ENCODE measurements at regions of chr15 and their contacts with region 1.

Region 1: GRCh38 chr15:94230956-94231722 is at the start of gene MCTP2:
- DNase-seq: peak; percentile 92
- ATAC-seq: peak; percentile 89
- H3K4me3 Mint-ChIP-seq: peak within 1 kb of the TSS; percentile 91
- H3K27ac Mint-ChIP-seq: peak within 1 kb of the TSS; percentile 97
- H3K4me1 Mint-ChIP-seq: peaks cover 57% of the 10 kb centered on the region
- H3K27me3 Mint-ChIP-seq: peaks cover 2% of the 10 kb centered on the region
- total RNA-seq, gene MCTP2: 26.1 to 28.5 TPM

Region 2: DNA sequence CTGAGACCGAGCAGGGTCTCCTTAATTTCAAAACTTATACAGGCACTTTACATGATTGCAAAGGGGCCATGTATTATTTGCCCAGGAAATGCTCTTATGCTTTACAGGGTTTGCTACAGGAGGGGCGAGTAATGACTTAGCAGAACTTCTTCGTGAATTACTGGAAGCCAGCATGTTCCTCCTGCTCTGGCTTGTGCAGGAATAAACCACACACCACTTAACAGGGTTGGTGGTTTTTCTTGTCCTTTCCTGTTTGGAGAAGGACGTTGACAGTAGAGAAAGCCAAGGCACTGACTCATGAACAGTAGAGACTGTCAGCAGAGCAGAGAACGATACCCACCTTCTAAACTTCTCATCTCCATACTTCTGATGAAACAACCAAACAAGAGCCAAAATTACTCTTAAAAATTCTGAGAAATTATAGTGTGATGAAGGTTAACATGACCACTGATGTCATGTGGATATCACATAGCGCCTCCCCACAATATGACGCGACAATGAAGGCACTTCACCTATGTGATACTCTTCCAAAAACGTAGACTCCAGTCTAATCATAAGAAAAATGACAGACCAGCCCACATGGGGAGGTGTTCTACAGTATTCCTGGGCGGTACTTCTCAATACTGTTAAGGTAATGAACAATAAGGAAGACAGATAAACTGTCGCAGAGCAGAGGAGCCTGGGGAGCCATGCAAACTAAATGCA is 24.5 kb before region 1 on chr15:
- POLR2A ChIA-PET with region 1: no interaction called
- DNase-seq: no peak
- ATAC-seq: peak; percentile 88
- H3K4me3 Mint-ChIP-seq: peak overlapping the region; percentile 65
- H3K27ac Mint-ChIP-seq: peak overlapping the region; percentile 90
- H3K4me1 Mint-ChIP-seq: peaks cover 25% of the 10 kb centered on the region
- H3K27me3 Mint-ChIP-seq: peaks cover 11% of the 10 kb centered on the region

Region 3: DNA sequence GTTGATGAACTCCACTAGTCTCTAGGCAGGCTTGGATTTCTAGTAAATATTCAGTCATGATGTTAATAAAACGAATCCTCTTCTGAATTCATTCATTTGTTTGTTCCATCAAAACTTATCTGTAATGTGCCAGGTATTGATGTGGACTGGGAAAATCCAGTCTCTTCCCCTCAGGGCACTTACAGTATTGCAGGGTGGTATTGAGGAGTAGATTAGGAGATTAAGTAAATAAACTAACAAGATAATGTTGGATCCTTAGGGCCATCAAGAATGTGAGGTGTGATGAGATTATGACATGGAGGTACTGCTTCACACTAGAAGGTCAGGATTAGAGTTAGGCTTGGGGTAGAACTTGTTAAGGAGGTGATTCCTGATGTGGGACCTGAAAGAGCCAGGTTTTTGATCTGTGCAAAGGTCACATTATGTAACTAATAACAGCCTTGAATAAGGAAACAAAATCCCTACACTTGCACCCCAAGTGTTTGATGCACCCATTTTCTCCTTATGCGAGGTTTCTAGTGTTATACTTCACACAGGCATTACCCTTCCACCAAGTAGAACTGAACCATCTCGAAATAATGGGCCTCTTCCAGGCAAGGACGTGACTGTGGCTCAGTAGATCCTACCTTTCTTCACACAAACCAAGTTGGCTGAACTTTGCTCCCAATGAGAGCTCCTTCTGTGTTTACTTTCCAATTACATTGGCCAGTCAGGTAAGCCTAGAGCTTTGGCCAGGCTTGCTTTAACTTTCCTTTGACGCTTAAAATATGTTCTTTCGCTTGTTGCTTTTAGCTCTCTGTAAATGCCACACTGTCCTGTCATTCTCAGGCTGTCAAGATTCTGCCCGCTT is 16.9 kb after region 1 on chr15:
- POLR2A ChIA-PET with region 1: no interaction called
- DNase-seq: no peak
- ATAC-seq: no peak
- H3K4me3 Mint-ChIP-seq: no peak overlapping the region
- H3K27ac Mint-ChIP-seq: no peak overlapping the region
- H3K4me1 Mint-ChIP-seq: peaks cover 16% of the 10 kb centered on the region
- H3K27me3 Mint-ChIP-seq: no peaks in the 10 kb centered on the region

Region 4: DNA sequence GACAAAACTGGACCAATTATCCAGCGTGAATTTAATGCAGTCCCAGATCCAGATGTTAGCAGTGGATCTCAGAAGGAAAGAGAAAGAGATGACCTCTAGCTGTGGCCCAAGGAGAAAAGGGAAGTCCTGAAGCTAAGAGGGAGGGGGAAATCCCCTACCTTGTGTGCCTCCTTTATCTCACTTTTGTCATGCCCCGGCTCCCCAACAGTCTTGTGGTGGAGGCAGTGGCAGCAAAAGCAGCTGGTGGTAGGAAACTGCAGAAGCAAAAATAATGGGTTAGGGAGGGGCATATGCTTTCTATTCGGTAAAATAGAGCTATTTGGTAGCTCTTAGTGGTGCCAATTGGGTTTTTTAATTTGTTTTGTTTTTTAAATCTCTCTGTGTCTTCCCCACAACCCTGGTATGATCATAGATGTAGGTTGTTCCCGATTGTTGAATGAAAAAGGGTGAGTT is 56.7 kb after region 1 on chr15:
- POLR2A ChIA-PET with region 1: interaction called, 15 read pairs
- DNase-seq: peak; percentile 46
- ATAC-seq: peak; percentile 97
- H3K4me3 Mint-ChIP-seq: peak overlapping the region; percentile 85
- H3K27ac Mint-ChIP-seq: peak overlapping the region; percentile 87
- H3K4me1 Mint-ChIP-seq: peaks cover 42% of the 10 kb centered on the region
- H3K27me3 Mint-ChIP-seq: no peaks in the 10 kb centered on the region

Region 5: GRCh38 chr15:94306700-94307650 is 75.8 kb after region 1 on chr15:
- POLR2A ChIA-PET with region 1: interaction called, 38 read pairs
- DNase-seq: no peak
- ATAC-seq: peak; percentile 44
- H3K4me3 Mint-ChIP-seq: peak overlapping the region; percentile 62
- H3K27ac Mint-ChIP-seq: peak overlapping the region; percentile 85
- H3K4me1 Mint-ChIP-seq: peaks cover 46% of the 10 kb centered on the region
- H3K27me3 Mint-ChIP-seq: no peaks in the 10 kb centered on the region

Region 6: DNA sequence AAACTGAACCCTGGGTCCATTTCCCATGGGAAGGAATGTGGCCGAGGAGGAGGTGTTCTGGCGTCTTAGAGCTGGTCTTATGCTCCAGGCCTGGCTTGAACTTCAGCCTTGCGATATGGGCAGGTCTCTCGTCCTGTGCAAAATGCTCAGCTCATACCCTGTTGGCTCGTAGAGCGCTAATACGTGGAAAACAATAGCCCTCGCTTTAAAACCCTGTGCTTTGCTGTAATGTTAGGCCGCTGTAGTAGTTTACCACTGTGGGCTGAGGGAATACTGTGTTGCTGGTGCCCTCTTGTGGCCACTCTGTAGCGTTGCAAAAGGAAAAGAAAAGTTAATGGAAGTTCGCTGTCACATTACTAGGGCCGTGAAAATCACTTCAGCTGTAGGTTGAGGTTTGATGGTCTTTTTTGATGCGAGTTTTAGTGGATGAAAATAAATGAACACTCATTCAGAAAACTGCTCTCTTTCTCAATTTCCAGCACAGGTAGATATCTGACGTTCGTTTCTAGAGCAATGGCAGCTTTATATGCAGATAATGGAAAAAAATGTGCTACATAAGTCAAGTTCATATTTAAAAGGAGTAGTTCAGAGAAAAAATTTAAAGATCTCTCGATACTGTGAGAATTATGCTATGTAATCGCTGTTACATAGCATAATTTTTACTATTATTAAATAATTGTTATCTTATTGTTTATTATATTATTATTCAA is 93.1 kb after region 1 on chr15:
- POLR2A ChIA-PET with region 1: interaction called, 14 read pairs
- DNase-seq: peak; percentile 50
- ATAC-seq: peak; percentile 91
- H3K4me3 Mint-ChIP-seq: peak overlapping the region; percentile 10
- H3K27ac Mint-ChIP-seq: no peak overlapping the region
- H3K4me1 Mint-ChIP-seq: peaks cover 26% of the 10 kb centered on the region
- H3K27me3 Mint-ChIP-seq: no peaks in the 10 kb centered on the region